HepG2 (cell line): ENCODE measurements at regions of chr11 and their contacts with region 1.

Region 1: DNA sequence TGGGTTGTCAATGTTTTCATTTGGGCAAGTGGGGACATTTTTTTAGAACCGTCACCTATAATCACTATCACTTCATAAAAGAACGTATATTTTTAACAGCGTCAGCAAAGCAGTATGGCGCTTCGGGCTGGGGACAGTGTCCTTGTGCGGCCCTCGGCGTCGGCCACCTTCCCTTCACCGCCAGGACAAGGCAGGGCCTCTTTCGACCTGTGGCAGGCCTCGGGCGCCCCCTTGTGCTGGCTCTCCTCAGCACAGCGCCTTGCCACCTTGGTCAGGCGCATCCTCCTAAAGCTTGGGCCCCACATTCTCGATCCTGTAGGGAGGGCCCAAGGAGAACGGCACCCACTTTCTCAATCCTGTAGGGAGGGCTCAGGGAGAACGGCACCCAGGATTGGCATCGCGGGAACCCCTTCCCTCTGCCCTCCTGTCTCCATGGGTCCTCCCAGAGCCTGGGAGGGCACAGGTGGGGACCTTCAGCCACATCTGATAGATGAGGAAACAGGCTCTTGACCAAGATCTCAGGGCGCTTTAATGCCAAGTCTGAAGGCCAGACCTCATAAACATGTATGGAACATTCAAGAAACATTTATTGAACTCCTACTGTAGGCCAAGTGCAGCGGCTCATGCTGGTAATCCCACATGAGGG is 11.5 kb upstream of the FADD start:
- DNase-seq: peak; percentile 52
- ATAC-seq: peak; percentile 95
- H3K4me3 ChIP-seq: no peak overlapping the region
- H3K27ac ChIP-seq: no peak overlapping the region
- H3K4me1 ChIP-seq: no peaks in the 10 kb centered on the region
- H3K27me3 ChIP-seq: peaks cover 10 to 25% of the 10 kb centered on the region in 2 experiments; a peak in 3 of 5 replicates
- CTCF ChIP-seq: peak; percentile 96
- EP300 ChIP-seq: no peak
- POLR2A ChIP-seq: no peak
- RAD21 ChIP-seq: peak; percentile 92

Region 2: DNA sequence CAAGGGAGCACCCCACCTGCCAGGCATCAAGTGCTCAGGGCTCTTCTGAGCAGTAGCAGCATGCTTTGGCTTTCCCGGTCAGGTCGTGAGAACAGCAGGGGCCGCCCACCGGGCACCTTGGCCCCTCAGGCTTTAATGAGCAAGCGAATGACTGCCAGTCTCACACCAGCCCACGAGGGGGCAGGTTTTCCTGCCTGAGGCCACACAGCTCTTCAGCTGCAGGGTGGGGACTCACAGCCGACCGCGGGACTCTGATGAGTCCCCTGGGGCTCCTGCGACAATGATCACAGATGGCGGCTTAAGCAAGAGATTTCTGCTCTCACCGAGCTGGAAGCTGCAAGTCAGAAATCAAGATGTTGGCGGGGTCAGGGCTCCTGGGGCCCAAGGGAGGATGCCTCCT is 473.5 kb before region 1 on chr11:
- CTCF ChIA-PET with region 1: no interaction called
- POLR2A ChIA-PET with region 1: no interaction called
- in situ Hi-C with region 1: loop called (anchors 10 kb)
- intact Hi-C with region 1: no loop called
- DNase-seq: peak; percentile 30
- ATAC-seq: peak; percentile 87
- H3K4me3 ChIP-seq: no peak overlapping the region
- H3K27ac ChIP-seq: no peak overlapping the region
- H3K4me1 ChIP-seq: no peaks in the 10 kb centered on the region
- H3K27me3 ChIP-seq: peaks cover 2 to 53% of the 10 kb centered on the region in 2 experiments; a peak in 4 of 5 replicates
- CTCF ChIP-seq: peak; percentile 69
- EP300 ChIP-seq: no peak
- POLR2A ChIP-seq: no peak
- RAD21 ChIP-seq: peak; percentile 74

Region 3: GRCh38 chr11:69909561-69910496 is 281.8 kb before region 1 on chr11:
- CTCF ChIA-PET with region 1: interaction called, 11 read pairs
- POLR2A ChIA-PET with region 1: no interaction called
- in situ Hi-C with region 1: loop called (anchors 5 kb)
- intact Hi-C with region 1: loop called (anchors 1 kb)
- DNase-seq: no peak
- ATAC-seq: peak; percentile 49
- H3K4me3 ChIP-seq: no peak overlapping the region
- H3K27ac ChIP-seq: no peak overlapping the region
- H3K4me1 ChIP-seq: no peaks in the 10 kb centered on the region
- H3K27me3 ChIP-seq: peaks cover 1 to 12% of the 10 kb centered on the region in 2 experiments; a peak in 2 of 5 replicates
- CTCF ChIP-seq: peak; percentile 68
- EP300 ChIP-seq: no peak
- POLR2A ChIP-seq: no peak
- RAD21 ChIP-seq: no peak

Region 4: GRCh38 chr11:69918938-69919650 is 272.5 kb before region 1 on chr11:
- CTCF ChIA-PET with region 1: interaction called, 22 read pairs
- POLR2A ChIA-PET with region 1: no interaction called
- in situ Hi-C with region 1: loop called (anchors 5 kb)
- intact Hi-C with region 1: loop called (anchors 1 kb)
- DNase-seq: peak; percentile 50
- ATAC-seq: peak; percentile 77
- H3K4me3 ChIP-seq: no peak overlapping the region
- H3K27ac ChIP-seq: no peak overlapping the region
- H3K4me1 ChIP-seq: no peaks in the 10 kb centered on the region
- H3K27me3 ChIP-seq: peaks cover 4 to 31% of the 10 kb centered on the region in 2 experiments; a peak in 4 of 5 replicates
- CTCF ChIP-seq: peak; percentile 94
- EP300 ChIP-seq: no peak
- POLR2A ChIP-seq: no peak
- RAD21 ChIP-seq: peak; percentile 90

Region 5: GRCh38 chr11:69943066-69943465 is 248.6 kb before region 1 on chr11:
- CTCF ChIA-PET with region 1: interaction called, 8 read pairs
- POLR2A ChIA-PET with region 1: no interaction called
- in situ Hi-C with region 1: no loop called
- intact Hi-C with region 1: loop called (anchors 1 kb)
- DNase-seq: peak; percentile 41
- ATAC-seq: peak; percentile 83
- H3K4me3 ChIP-seq: no peak overlapping the region
- H3K27ac ChIP-seq: no peak overlapping the region
- H3K4me1 ChIP-seq: no peaks in the 10 kb centered on the region
- H3K27me3 ChIP-seq: peaks cover 5 to 30% of the 10 kb centered on the region in 2 experiments; a peak in 4 of 5 replicates
- CTCF ChIP-seq: peak; percentile 69
- EP300 ChIP-seq: no peak
- POLR2A ChIP-seq: no peak
- RAD21 ChIP-seq: peak; percentile 41; the same call in 1 of the 2 replicates

Region 6: DNA sequence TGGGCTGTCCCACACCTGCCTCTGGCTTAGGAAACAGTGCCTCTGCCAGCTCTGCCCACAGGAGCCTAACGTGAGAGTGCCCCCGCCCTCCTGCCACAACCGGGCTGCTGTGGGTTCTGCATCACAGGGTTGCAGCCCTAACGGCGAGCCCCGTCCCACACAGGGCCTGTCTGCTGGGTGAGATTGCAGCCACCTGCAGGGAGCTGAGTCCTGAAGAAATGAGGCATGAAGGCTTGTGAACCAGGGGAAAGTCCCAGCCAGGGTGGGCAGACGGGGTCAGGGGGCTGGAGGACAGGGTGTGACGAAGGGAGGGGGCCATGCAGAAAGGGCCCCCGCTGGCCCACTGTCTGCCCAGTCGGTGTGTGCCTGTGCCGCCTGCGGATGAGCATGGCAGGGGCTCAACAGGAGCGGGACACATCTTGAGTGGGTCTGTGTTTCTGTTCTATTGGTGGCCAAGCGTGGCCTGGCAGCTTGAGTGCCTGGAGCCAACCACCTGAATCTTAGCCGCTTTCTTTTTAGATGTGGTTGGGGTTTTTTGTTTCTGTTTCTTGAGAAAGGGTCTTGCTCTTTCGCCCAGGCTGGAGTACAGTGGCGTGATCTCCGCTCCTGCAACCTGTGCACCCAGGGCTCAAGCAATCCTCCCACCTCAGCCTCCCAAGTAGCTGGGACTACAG is 245.6 kb after region 1 on chr11:
- CTCF ChIA-PET with region 1: no interaction called
- POLR2A ChIA-PET with region 1: no interaction called
- in situ Hi-C with region 1: no loop called
- intact Hi-C with region 1: no loop called
- DNase-seq: no peak
- ATAC-seq: no peak
- H3K4me3 ChIP-seq: no peak overlapping the region
- H3K27ac ChIP-seq: no peak overlapping the region
- H3K4me1 ChIP-seq: 0 out of 2 replicates have a peak, but pooled peaks cover 5% of the 10 kb centered on the region
- H3K27me3 ChIP-seq: no peaks in the 10 kb centered on the region
- CTCF ChIP-seq: no peak
- EP300 ChIP-seq: no peak
- POLR2A ChIP-seq: peak in 1 of 2 experiments; percentile 54; a peak in 2 of 4 replicates
- RAD21 ChIP-seq: no peak